ENCODE measurements at regions of chr7 and their contacts with region 1.

Region 1: DNA sequence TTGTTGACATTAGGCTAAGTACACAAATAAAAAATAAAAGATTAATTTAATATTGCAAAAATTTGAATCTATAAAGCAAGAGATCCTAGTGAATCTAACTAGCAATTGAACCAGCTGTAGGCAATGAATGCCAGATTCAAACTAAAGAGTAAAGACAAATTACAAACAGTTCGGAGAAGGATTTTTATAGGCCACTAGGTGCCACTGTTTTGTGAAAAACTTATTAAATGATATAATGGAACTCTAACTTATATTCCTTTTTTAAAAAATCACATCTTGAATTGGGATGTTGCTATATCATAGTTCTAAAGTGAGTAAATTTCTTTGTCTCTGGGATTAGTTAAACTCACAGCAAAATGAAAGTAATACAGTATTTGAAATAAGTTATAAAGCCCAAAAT is 39.1 kb upstream of the GNAI1 start:
- DNase-seq: peak; percentile 21
- H3K4me3 ChIP-seq: no peak overlapping the region
- H3K27ac ChIP-seq: no peak overlapping the region
- H3K4me1 ChIP-seq: no peaks in the 10 kb centered on the region
- H3K27me3 ChIP-seq: no peaks in the 10 kb centered on the region
- CTCF ChIP-seq: peak; percentile 78
- EP300 ChIP-seq: no peak
- RAD21 ChIP-seq: peak; percentile 61

Region 2: GRCh38 chr7:80107278-80107677 is 11.7 kb after region 1 on chr7:
- CTCF ChIA-PET with region 1: interaction called, 15 read pairs
- POLR2A ChIA-PET with region 1: no interaction called
- DNase-seq: no peak
- H3K4me3 ChIP-seq: no peak overlapping the region
- H3K27ac ChIP-seq: no peak overlapping the region
- H3K4me1 ChIP-seq: no peaks in the 10 kb centered on the region
- H3K27me3 ChIP-seq: no peaks in the 10 kb centered on the region
- CTCF ChIP-seq: no peak
- EP300 ChIP-seq: no peak
- RAD21 ChIP-seq: no peak

Region 3: GRCh38 chr7:80114159-80114558 is 18.6 kb after region 1 on chr7:
- CTCF ChIA-PET with region 1: interaction called, 15 read pairs
- POLR2A ChIA-PET with region 1: no interaction called
- DNase-seq: no peak
- H3K4me3 ChIP-seq: no peak overlapping the region
- H3K27ac ChIP-seq: no peak overlapping the region
- H3K4me1 ChIP-seq: no peaks in the 10 kb centered on the region
- H3K27me3 ChIP-seq: no peaks in the 10 kb centered on the region
- CTCF ChIP-seq: no peak
- EP300 ChIP-seq: no peak
- RAD21 ChIP-seq: no peak